MCF 10A (cell line): ENCODE measurements at regions of chr4 and their contacts with region 1.

Region 1: DNA sequence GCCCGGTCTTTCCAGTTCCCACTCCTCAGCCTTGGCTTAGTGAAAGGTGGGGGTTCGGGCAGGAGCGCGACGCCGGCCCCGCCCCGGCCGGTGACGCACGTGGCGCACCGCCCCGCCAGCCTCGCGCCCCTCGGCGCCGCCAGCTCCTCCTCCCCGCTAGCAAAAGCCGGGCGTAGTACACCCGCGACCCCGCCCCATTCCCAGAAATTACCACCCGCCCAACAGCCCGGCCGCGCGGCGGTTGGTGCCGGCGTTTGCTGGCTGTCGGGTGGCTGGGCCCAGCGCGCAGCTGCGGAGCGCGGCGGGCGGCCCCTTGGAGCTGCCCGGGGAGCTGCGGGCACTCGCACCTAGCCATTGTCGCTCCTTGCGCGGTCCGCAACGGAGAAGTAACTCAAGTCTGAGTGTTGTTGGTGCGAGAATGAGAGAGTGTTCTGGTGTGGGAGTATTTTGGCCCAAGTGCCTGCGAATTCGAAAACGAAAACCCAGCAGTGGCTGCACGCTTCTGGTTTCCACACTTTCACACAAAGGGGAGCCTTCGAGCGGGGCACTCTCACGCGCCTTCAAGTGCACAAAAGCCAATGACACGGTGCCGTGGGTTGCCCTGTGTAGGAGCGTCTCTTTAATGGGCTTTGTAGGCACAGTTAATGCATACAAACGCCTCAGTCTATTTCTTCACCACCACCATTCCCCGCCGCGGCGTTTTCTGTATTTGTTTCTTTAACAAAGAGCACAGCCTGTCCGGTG is 1.0 kb upstream of the ELF2 start:
- DNase-seq: peak; percentile 94
- H3K4me3 Mint-ChIP-seq: peak overlapping the region; percentile 96
- H3K27ac Mint-ChIP-seq: peak overlapping the region; percentile 81
- H3K4me1 Mint-ChIP-seq: peaks cover 8% of the 10 kb centered on the region
- H3K27me3 Mint-ChIP-seq: no peaks in the 10 kb centered on the region
- CTCF ChIP-seq: no peak

Region 2: GRCh38 chr4:139015269-139015947 is 162.6 kb before region 1 on chr4 and contains the start of gene NOCT:
- CTCF ChIA-PET with region 1: no interaction called
- POLR2A ChIA-PET with region 1: interaction called, 46 read pairs
- intact Hi-C with region 1: no loop called
- DNase-seq: peak; percentile 94
- H3K4me3 Mint-ChIP-seq: peak within 1 kb of the TSS; percentile 72
- H3K27ac Mint-ChIP-seq: peak within 1 kb of the TSS; percentile 95
- H3K4me1 Mint-ChIP-seq: peaks cover 38% of the 10 kb centered on the region
- H3K27me3 Mint-ChIP-seq: no peaks in the 10 kb centered on the region
- CTCF ChIP-seq: no peak
- total RNA-seq, gene NOCT: 16.5 and 25.5 TPM in 2 replicates

Region 3: DNA sequence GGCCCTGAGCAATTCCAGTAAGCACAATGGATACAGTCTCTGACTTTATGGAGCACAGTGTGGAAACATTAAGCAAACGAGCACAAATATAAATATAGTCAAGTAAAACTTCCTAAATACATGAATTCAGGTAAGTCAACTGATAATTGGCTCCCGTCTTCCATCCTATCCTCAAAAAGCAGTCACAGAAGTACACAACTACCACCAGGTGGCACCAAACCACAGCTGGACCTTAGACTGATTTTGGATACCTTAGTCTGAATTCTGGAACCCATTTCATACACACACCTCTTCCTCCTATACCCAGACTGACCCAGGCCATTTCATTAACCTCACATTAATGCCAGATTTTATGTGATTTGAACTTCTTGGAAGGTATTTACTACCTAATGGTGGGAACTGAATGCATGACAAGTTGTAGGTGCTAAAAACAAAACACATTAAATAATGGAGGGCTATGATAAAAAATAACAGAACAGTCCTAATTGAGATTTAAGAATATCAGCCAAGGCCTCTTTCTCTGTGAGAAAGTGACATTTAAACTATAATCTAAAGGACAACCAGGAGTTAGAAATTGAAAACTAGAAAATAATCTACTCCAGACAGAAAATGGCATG is 78.6 kb before region 1 on chr4:
- CTCF ChIA-PET with region 1: interaction called, 8 read pairs
- POLR2A ChIA-PET with region 1: interaction called, 38 read pairs
- intact Hi-C with region 1: no loop called
- DNase-seq: peak; percentile 92
- H3K4me3 Mint-ChIP-seq: no peak overlapping the region
- H3K27ac Mint-ChIP-seq: no peak overlapping the region
- H3K4me1 Mint-ChIP-seq: peaks cover 6% of the 10 kb centered on the region
- H3K27me3 Mint-ChIP-seq: no peaks in the 10 kb centered on the region
- CTCF ChIP-seq: peak; percentile 80

Region 4: GRCh38 chr4:139208404-139208945 is 30.4 kb after region 1 on chr4:
- CTCF ChIA-PET with region 1: no interaction called
- POLR2A ChIA-PET with region 1: interaction called, 10 read pairs
- intact Hi-C with region 1: no loop called
- DNase-seq: peak; percentile 93
- H3K4me3 Mint-ChIP-seq: no peak overlapping the region
- H3K27ac Mint-ChIP-seq: peak overlapping the region; percentile 74
- H3K4me1 Mint-ChIP-seq: peaks cover 12% of the 10 kb centered on the region
- H3K27me3 Mint-ChIP-seq: no peaks in the 10 kb centered on the region
- CTCF ChIP-seq: no peak

Region 5: DNA sequence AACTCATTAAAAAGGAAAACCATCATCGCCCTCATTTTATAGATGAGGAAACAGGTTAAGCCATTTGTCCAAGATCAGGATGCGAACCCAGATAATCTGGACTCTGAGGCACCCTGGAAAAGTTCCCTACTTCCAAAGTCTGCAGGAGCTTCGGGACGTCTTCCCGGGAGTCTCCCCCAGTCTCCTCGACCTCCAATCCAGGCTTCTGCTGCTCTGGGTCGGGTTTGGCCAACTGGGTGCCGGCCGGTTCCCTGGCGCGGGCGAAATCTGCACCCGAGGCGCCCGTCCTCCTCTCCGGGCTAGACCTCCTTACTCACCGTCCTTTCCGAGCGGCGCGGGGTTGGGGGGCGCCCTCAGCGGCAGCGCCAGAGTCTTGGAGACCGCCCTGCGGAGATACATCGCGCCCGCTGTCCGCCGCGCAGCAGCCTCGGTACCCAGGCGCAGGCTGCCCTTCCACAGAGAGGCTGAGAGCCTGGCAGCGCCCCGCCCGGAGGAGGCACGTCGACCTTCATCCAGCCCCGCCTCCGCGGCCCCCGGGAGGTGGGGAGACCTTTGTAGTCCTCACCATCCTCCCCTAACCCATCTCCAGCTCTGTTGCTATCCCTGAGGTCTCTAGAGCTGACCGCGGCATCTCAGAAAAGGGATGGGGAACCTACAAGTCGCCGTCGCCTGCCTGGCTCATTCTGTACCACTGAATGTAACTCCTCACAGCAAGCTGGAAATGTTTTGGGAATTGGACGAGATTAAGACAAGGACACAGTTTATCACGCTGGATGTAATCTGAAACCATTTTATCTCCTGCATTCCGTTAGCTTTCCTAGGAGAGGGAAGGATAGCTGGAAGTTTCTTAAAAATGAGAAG is 102.0 kb after region 1 on chr4 and contains the start of gene MGARP:
- CTCF ChIA-PET with region 1: no interaction called
- POLR2A ChIA-PET with region 1: interaction called, 3 read pairs
- intact Hi-C with region 1: loop called (anchors 5 kb)
- DNase-seq: no peak
- H3K4me3 Mint-ChIP-seq: no peak within 1 kb of the TSS
- H3K27ac Mint-ChIP-seq: no peak within 1 kb of the TSS
- H3K4me1 Mint-ChIP-seq: no peaks in the 10 kb centered on the region
- H3K27me3 Mint-ChIP-seq: no peaks in the 10 kb centered on the region
- CTCF ChIP-seq: no peak
- total RNA-seq, gene MGARP: not detected in 2 replicates

Region 6: GRCh38 chr4:139315221-139315675 is 137.2 kb after region 1 on chr4:
- CTCF ChIA-PET with region 1: interaction called, 4 read pairs
- POLR2A ChIA-PET with region 1: interaction called, 25 read pairs
- intact Hi-C with region 1: no loop called
- DNase-seq: no peak
- H3K4me3 Mint-ChIP-seq: no peak overlapping the region
- H3K27ac Mint-ChIP-seq: peak overlapping the region; percentile 87
- H3K4me1 Mint-ChIP-seq: peaks cover 40% of the 10 kb centered on the region
- H3K27me3 Mint-ChIP-seq: no peaks in the 10 kb centered on the region
- CTCF ChIP-seq: no peak

Region 7: DNA sequence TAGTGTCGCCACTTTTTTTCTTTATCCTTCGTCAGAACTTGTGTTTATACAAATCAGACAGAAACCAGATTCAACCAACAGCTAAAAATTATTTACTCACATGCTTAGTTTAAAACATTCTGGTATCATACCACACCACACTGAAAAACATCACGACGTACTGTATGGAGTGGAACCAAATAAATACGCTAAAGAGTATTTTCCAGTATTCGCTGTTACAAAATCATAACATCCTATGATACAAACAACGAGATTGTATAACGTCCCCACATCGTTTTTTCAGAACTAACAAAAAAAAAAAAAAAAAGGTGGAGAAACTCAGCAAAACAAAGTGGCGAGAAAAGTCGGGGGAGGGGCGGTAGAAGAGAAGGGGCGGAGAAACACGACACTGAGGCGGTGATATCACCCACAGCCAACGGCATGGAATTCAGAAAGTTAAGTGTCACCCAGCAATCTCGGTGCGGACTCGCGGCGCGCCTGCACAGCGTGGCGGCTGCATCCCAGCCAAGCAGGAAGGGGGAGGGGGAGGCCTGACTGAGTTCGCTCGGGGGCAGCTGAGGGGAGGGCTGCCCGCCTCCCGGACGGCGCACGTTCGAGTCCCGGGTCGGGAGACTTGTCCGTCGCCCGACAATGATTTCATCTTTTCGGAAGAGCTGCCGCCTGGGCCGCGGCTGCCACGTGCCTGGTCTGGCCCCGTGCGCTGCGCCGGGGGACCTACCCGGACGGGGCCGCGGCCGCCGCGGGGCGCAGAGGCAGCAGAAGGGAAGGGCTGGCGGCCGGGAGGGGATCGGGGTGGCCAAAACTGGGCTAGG is 377.1 kb after region 1 on chr4:
- CTCF ChIA-PET with region 1: interaction called, 3 read pairs
- POLR2A ChIA-PET with region 1: interaction called, 20 read pairs
- intact Hi-C with region 1: no loop called
- DNase-seq: peak; percentile 89
- H3K4me3 Mint-ChIP-seq: peak overlapping the region; percentile 82
- H3K27ac Mint-ChIP-seq: peak overlapping the region; percentile 73
- H3K4me1 Mint-ChIP-seq: peaks cover 25% of the 10 kb centered on the region
- H3K27me3 Mint-ChIP-seq: no peaks in the 10 kb centered on the region
- CTCF ChIP-seq: no peak